A673 (cell line): ENCODE measurements at regions of chr1 and their contacts with region 1.

Region 1: GRCh38 chr1:16366722-16367257 is at the start of gene SZRD1:
- DNase-seq: peak; percentile 100
- H3K4me3 ChIP-seq: peak within 1 kb of the TSS; percentile 87
- H3K27ac ChIP-seq: peak within 1 kb of the TSS; percentile 93
- H3K4me1 ChIP-seq: peaks cover 10% of the 10 kb centered on the region
- H3K27me3 ChIP-seq: no peaks in the 10 kb centered on the region
- CTCF ChIP-seq: no peak
- total RNA-seq, gene SZRD1: 174 and 187 TPM in 2 replicates

Region 2: DNA sequence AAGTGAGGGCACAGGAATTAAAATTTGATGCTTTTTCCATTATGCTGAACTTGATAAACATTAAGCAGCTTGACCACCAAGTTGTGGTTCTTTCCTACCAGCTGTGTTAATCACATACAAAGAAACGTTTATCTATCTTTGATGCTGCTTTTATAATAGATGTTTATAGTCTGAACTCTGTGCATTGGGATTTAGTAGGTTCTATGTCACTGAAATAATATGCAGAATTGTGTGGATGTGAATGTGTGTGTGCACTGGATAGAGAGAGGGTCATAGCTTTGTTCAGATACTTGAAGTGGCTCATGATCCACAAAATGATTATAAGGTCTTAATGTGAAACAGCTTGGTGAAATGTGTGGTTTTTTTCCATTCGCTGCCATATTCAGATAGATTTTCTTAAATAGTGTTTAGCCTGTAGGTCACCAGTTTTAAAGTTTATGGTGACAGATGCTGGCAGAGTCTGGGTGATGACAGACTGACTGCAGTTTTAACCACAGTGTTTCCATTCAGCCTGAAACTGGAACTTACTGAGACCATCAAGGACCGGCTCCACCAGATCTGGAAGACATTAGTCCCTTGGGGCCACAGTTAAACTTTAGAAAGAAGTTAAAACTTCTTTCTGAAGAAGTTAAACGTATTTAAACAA is 739.3 kb before region 1 on chr1:
- CTCF ChIA-PET with region 1: no interaction called
- POLR2A ChIA-PET with region 1: no interaction called
- intact Hi-C with region 1: no loop called
- DNase-seq: no peak
- H3K4me3 ChIP-seq: no peak overlapping the region
- H3K27ac ChIP-seq: peak overlapping the region; percentile 11
- H3K4me1 ChIP-seq: peaks cover 3% of the 10 kb centered on the region
- H3K27me3 ChIP-seq: no peaks in the 10 kb centered on the region
- CTCF ChIP-seq: no peak

Region 3: DNA sequence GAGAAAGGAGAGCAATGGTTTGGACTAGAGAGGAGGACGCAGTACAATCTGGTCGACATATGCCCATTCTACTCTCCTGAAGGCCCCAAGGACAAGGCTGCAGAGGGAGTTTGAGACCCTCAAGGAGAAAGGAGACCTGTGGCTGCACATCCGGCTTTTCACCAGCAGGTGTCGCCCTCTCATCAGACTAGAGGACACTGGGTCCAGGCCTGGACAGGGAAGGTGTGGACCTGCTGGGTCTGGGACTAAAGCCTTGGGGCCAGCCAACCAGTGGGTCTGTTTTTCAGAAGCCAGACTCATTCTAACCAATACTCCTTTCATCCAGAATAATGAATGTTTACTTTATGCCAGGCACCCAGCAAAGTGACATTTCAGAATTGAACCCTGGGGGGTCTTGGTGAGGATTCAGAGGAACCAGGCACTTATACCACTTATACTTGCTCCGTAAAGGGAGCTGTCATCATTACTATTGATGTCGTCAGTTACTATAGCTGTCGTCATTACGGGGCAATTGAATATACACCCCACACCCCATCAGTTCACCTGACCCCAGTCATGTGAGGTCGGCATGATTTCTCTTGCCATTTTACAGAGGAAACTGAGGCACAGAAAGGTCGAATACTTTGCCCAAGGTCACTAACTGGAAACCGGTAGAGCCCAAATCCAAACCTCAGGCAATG is 357.6 kb before region 1 on chr1:
- CTCF ChIA-PET with region 1: no interaction called
- POLR2A ChIA-PET with region 1: no interaction called
- intact Hi-C with region 1: loop called (anchors 5 kb)
- DNase-seq: peak; percentile 84
- H3K4me3 ChIP-seq: no peak overlapping the region
- H3K27ac ChIP-seq: no peak overlapping the region
- H3K4me1 ChIP-seq: peaks cover 10% of the 10 kb centered on the region
- H3K27me3 ChIP-seq: no peaks in the 10 kb centered on the region
- CTCF ChIP-seq: peak; percentile 98

Region 4: DNA sequence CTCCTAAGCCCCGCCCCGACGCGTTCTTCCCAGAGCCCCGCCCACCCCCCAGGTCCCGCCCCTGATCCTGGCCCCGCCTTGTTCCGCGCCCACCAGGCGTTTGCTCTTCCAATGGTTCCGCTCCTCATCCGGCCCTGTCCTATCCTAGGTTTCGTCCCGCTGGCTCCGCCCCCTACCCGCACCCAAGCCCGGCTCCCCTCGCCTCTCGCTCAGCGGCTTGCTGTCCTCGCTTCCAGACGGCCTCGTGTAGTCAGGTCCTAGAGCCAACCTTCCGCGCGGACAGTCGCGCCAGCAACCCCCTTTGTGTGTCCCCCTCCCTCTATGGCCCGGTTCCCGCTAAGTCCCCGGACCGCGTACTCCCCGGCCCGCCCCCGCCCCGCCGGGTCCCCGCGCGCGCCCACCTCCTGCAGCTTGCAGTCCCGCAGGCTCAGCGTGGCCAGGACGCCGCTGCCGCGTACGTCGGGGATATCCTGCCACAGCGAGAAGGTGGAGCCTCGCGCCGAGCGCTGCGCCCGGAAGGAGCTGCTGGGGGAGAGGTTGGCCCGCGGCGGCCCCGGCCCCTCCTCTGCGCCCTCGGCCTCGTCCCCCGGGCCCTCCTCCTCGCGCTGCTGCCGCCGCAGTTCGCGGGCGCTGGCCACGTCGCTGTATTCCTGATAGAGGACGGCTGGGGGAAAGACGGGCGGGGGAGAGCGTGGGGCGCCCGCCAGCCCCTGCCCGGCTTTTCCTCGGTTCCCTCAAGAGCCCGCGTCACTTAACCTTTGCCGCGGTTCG is 160.1 kb before region 1 on chr1:
- CTCF ChIA-PET with region 1: no interaction called
- POLR2A ChIA-PET with region 1: no interaction called
- intact Hi-C with region 1: loop called (anchors 10 kb)
- DNase-seq: peak; percentile 99
- H3K4me3 ChIP-seq: peak overlapping the region; percentile 56
- H3K27ac ChIP-seq: peak overlapping the region; percentile 81
- H3K4me1 ChIP-seq: peaks cover 9% of the 10 kb centered on the region
- H3K27me3 ChIP-seq: no peaks in the 10 kb centered on the region
- CTCF ChIP-seq: no peak

Region 5: GRCh38 chr1:16243936-16244649 is 122.7 kb before region 1 on chr1:
- CTCF ChIA-PET with region 1: interaction called, 5 read pairs
- POLR2A ChIA-PET with region 1: no interaction called
- intact Hi-C with region 1: loop called (anchors 10 kb)
- DNase-seq: peak; percentile 88
- H3K4me3 ChIP-seq: no peak overlapping the region
- H3K27ac ChIP-seq: no peak overlapping the region
- H3K4me1 ChIP-seq: peaks cover 21% of the 10 kb centered on the region
- H3K27me3 ChIP-seq: no peaks in the 10 kb centered on the region
- CTCF ChIP-seq: peak; percentile 86

Region 6: DNA sequence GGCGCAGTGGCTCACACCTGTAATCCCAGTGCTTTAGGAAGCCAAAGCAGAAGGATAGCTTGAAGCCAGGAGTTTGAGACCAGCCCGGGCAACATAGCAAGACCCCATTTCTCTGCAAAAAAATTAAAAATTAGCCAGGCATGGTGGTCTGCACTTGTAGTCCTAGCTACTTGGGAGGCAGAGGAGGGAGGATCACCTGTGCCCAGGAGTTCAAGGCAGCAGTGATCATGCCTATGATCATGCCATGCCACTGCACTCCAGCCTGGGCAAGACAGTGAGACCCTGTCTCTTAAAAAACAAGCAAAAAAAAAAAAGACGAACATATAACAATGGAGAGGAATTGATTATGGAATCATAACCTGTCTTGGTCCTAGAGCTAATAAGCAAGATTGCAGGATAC is 59.6 kb before region 1 on chr1:
- CTCF ChIA-PET with region 1: no interaction called
- POLR2A ChIA-PET with region 1: interaction called, 10 read pairs
- intact Hi-C with region 1: no loop called
- DNase-seq: no peak
- H3K4me3 ChIP-seq: no peak overlapping the region
- H3K27ac ChIP-seq: no peak overlapping the region
- H3K4me1 ChIP-seq: no peaks in the 10 kb centered on the region
- H3K27me3 ChIP-seq: no peaks in the 10 kb centered on the region
- CTCF ChIP-seq: no peak

Region 7: GRCh38 chr1:16351994-16352841 is 14.6 kb before region 1 on chr1 and contains the start of gene FBXO42:
- CTCF ChIA-PET with region 1: interaction called, 14 read pairs
- POLR2A ChIA-PET with region 1: no interaction called
- intact Hi-C with region 1: no loop called
- DNase-seq: peak; percentile 95
- H3K4me3 ChIP-seq: peak within 1 kb of the TSS; percentile 64
- H3K27ac ChIP-seq: peak within 1 kb of the TSS; percentile 88
- H3K4me1 ChIP-seq: peaks cover 11% of the 10 kb centered on the region
- H3K27me3 ChIP-seq: no peaks in the 10 kb centered on the region
- CTCF ChIP-seq: peak; percentile 42; the same call in 1 of the 2 replicates
- total RNA-seq, gene FBXO42: 19.5 and 21.1 TPM in 2 replicates